ENCODE measurements at regions of chr1 and their contacts with region 1.

Region 1: DNA sequence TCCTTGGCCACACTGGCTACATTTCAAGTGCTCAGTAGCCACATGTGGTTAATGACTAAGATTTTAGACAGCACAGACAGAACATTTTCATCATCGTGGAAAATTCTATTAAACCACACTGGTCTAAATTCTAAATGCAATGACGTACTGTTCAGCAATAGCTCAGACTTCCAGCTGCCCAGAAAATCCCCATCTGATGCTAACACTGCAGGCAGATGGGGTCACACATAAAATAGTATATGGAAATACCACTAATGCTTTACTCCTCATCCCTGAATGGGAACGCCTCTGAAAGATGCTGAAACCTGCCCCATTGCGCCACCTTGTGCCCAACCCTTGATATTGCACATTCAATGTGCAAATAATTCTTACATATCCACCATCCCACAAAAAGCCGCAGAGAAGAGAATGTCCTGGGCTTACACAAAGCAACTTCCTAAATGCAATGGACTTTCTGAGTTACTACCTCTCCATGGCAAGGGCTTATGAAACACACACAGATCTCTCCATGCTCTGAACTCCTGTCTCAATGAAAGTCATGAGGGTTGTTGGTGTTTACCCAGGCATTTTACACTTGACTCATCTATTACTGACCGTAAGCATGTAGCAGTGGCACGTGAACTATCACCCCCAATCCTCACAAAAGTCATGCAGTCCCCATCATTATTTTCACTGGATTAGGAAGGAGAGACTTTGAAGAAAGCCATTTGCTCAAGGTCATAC is 20.3 kb upstream of the SLC5A9 start:
- DNase-seq: peak; percentile 51
- H3K4me3 ChIP-seq: no peak overlapping the region
- H3K27ac ChIP-seq: no peak overlapping the region
- H3K4me1 ChIP-seq: no peaks in the 10 kb centered on the region
- CTCF ChIP-seq: peak; percentile 90

Region 2: DNA sequence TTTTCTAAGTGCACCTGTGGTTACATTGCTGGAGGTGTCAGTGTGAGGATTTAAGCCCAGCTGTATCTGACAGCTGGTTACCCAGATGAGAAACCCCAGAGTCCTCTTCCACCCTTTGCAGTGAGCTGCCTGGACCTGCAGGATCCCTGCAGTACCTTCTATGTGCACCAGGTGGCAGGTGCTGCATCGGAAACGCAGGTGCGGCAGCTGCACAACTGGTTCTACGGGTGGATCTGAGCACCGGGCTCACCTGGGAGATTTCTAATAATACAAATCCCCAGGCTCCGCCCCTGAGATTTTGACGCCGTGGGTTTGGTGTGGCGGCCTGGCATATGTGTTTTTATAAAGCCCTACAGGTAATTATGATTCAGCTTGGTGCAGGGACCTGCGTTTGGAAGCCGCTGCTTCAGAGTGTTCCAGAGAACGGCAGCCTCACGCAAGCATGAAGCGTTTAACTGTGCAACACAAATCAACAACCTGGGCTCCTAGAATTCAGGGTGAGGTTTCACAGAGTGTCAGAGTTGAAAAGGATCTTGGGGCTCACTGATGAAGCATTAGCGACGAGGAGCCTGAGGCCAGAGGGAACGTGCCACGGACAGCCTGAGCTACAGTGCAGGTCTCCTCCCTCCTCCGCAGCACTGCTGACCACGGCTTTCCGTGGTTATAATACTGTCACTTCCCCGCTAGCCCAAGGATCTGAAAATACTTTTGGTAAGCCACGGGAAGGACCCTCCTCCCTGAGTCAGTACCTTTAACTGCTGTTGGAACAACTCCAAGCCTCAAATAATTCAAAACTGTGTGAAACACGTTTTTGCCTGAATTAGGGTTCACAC is 108.3 kb before region 1 on chr1:
- CTCF ChIA-PET with region 1: no interaction called
- POLR2A ChIA-PET with region 1: no interaction called
- intact Hi-C with region 1: loop called (anchors 1 kb)
- DNase-seq: peak; percentile 62
- H3K4me3 ChIP-seq: no peak overlapping the region
- H3K27ac ChIP-seq: no peak overlapping the region
- H3K4me1 ChIP-seq: no peaks in the 10 kb centered on the region
- CTCF ChIP-seq: peak; percentile 80

Region 3: GRCh38 chr1:48109390-48110013 is 92.7 kb before region 1 on chr1:
- CTCF ChIA-PET with region 1: no interaction called
- POLR2A ChIA-PET with region 1: no interaction called
- intact Hi-C with region 1: loop called (anchors 1 kb)
- DNase-seq: peak; percentile 49
- H3K4me3 ChIP-seq: no peak overlapping the region
- H3K27ac ChIP-seq: no peak overlapping the region
- H3K4me1 ChIP-seq: no peaks in the 10 kb centered on the region
- CTCF ChIP-seq: peak; percentile 91

Region 4: GRCh38 chr1:48236716-48237470 is 34.7 kb after region 1 on chr1:
- CTCF ChIA-PET with region 1: no interaction called
- POLR2A ChIA-PET with region 1: no interaction called
- intact Hi-C with region 1: loop called (anchors 5 kb)
- DNase-seq: peak; percentile 42
- H3K4me3 ChIP-seq: no peak overlapping the region
- H3K27ac ChIP-seq: no peak overlapping the region
- H3K4me1 ChIP-seq: no peaks in the 10 kb centered on the region
- CTCF ChIP-seq: peak; percentile 78

Measured in OCI-LY7 (cell line).